ENCODE measurements at regions of chr2 and their contacts with region 1.

Region 1: DNA sequence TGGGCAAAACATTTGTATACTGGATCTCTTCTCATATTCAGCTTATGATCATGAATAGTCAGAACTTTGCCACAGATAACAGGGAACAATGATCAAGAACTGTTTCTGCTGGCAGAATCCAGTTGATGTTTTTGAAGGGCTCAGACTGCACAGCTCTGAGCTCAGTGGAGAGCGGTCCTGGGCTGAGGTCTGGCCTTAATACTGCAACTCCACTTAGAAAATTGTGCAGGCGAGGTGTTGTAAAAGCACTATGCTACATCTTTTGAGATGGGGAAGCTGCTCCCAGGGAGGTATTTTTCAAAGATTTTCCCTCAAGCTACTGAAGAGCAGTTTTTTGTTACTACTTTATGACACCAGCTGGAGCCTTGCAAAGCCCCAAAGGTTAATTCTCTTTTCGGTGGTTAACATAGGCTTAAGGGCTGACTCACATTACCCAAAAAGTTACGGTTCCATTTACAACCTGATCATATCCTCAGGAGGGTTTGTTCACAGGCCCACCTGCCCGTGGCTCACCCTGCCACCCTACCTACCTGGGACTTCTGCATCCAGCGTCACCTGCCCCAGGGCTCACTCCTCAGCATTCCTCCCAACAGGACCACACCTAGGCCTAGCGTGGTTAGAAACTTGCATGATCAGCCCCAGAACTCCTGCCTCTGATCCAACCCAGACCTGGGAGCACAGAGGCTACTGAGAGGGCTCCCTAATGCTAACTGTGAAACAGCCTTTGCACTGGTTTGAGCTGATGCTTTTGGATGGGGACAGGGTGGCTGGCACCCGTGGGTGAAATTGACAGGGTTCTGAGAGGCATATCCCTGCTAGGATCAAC is 114.4 kb downstream of the NCK2 start:
- DNase-seq: peak; percentile 46
- H3K4me3 Mint-ChIP-seq: no peak overlapping the region
- H3K27ac Mint-ChIP-seq: peak overlapping the region; percentile 91
- H3K4me1 Mint-ChIP-seq: peaks cover 93% of the 10 kb centered on the region
- H3K27me3 Mint-ChIP-seq: no peaks in the 10 kb centered on the region

Region 2: DNA sequence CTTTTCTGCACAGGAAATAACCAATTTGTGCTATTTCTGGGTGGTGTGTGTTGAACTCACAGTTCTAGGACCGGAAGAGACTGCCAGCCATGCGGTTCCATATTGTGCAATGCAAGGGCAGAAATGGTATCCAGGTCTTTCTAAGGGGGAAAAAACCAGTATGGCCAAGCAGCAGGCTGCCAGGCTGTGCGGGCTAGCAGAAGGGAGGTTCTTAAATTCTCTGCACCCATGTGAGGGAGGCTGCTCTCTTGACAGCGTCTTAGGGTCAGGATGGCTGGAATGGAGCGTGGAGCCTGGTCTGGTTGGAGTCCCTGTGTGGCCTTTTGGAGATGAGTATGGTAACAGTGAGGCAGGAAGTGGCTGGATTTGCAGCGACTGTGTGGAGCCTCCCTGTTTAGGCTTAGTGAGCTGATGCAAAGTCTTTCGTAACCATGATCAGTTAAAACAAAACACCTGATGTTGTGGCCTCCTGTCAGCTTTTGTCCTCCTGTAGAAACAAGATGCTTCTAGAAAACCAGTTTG is 61.7 kb before region 1 on chr2:
- CTCF ChIA-PET with region 1: interaction called, 3 read pairs
- intact Hi-C with region 1: loop called (anchors 1 kb)
- DNase-seq: peak; percentile 66
- H3K4me3 Mint-ChIP-seq: peak overlapping the region; percentile 32
- H3K27ac Mint-ChIP-seq: peak overlapping the region; percentile 92
- H3K4me1 Mint-ChIP-seq: peaks cover 93% of the 10 kb centered on the region
- H3K27me3 Mint-ChIP-seq: no peaks in the 10 kb centered on the region

Region 3: DNA sequence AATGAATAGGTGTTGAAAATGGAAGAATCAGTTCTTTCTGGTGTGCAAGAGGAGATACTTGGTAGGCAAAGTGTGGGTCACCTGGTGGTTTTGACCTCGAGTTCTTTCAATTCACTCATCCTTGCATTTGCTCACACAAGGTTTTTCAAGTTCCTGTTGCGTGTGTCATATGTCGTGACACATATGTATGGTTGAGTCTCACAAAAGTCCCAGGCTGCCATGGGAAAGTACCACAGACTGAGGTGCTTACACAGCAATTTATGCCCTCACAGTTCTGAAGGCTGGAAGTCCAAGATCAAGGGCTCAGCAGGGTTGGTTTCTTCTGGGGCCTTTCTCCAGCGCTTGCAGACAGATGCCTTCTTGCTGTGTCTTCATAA is 50.0 kb before region 1 on chr2:
- CTCF ChIA-PET with region 1: no interaction called
- intact Hi-C with region 1: loop called (anchors 1 kb)
- DNase-seq: peak; percentile 76
- H3K4me3 Mint-ChIP-seq: no peak overlapping the region
- H3K27ac Mint-ChIP-seq: peak overlapping the region; percentile 73
- H3K4me1 Mint-ChIP-seq: peaks cover 87% of the 10 kb centered on the region
- H3K27me3 Mint-ChIP-seq: no peaks in the 10 kb centered on the region

Region 4: GRCh38 chr2:105873721-105874120 is 14.6 kb after region 1 on chr2:
- CTCF ChIA-PET with region 1: interaction called, 6 read pairs
- intact Hi-C with region 1: loop called (anchors 2 kb)
- DNase-seq: peak; percentile 70
- H3K4me3 Mint-ChIP-seq: no peak overlapping the region
- H3K27ac Mint-ChIP-seq: peak overlapping the region; percentile 51
- H3K4me1 Mint-ChIP-seq: peaks cover 96% of the 10 kb centered on the region
- H3K27me3 Mint-ChIP-seq: no peaks in the 10 kb centered on the region